ENCODE measurements at regions of chr1 and their contacts with region 1.

Region 1: DNA sequence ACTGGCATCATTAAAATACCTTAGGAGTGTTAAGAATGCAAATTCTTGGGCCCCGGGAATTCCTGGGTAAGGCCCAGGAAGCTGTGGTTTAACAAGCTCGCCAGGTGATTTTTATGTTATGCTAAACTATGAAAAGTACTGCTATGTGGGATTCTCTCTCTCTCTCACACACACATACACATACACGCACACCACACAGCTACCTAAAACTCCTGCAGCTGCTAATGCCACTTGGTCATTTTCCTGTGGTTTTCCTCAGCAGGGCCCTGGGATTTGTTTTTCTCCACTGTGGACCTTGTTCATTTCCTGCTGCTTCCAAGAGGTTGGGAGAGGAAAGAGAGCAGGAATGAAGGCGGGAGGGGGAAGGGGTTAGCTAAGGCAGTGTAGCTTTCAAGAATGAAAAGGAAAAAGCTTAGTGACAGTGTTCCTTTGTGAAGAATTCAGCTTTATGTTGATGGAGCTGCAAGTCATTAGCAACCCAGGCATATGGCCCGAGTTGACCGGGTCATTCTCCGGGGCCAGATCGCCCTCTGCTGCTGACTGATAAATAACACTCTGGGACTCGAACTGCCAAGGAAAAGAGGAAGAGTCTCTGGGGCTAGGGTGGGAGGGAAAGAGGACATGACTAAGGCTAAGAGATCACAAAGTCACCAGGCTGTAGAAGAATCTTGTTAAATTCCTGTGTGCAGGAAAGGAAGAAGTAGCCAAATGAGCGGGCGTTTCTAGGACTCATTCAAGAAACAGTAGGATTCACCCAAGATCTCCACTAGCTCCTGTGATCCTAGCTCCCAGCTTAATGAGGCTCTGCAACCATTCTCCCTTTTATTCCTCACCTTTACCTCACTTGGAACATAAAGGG is 30.5 kb upstream of the LRIG2 start:
- DNase-seq: peak; percentile 81
- ATAC-seq: peak; percentile 89 to 93

Region 2: GRCh38 chr1:112809253-112809684 is 233.2 kb before region 1 on chr1:
- intact Hi-C with region 1: loop called in 1 of 2 experiments (anchors 5 kb)
- DNase-seq: peak; percentile 79
- ATAC-seq: peak; percentile 86 to 94

Region 3: GRCh38 chr1:112939810-112940209 is 102.7 kb before region 1 on chr1:
- intact Hi-C with region 1: no loop called
- DNase-seq: no peak
- ATAC-seq: no peak